Mammary epithelial cell (primary cell): ENCODE measurements at regions of chr5 and their contacts with region 1.

Region 1: DNA sequence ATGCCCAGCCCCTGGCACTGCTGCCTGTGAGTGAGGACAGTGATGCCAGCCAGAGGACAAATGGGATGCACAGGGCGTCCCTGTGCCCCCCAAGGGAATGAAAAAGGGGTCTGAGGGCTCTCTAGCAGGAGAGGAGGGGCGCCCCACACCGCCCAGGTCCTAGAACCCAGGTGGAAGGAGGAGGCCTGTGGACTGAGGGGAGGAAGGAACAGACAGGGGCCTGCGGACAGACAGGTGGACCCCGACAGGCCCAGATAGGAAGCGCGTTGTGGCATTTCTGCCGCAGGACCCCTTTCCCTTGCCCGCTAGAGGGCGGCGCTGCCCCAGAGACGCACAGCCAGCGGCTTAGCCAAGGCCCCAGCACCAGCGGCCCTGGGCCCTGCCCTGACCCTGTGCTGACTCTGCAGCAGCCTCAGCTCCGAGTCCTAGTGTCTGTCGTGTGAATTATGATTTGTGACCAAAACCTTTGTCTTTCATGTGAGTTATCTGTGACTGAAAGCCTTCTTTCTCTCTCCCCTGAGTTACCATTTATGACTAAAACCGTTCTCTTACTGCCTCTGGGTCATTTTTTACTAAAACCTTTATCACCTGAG is 30.7 kb downstream of the TRIP13 start:
- DNase-seq: peak; percentile 43
- H3K4me3 ChIP-seq: no peak overlapping the region
- H3K27ac ChIP-seq: no peak overlapping the region
- H3K4me1 ChIP-seq: no peaks in the 10 kb centered on the region
- H3K27me3 ChIP-seq: peaks cover 6% of the 10 kb centered on the region
- CTCF ChIP-seq: peak; percentile 75 to 93

Region 2: DNA sequence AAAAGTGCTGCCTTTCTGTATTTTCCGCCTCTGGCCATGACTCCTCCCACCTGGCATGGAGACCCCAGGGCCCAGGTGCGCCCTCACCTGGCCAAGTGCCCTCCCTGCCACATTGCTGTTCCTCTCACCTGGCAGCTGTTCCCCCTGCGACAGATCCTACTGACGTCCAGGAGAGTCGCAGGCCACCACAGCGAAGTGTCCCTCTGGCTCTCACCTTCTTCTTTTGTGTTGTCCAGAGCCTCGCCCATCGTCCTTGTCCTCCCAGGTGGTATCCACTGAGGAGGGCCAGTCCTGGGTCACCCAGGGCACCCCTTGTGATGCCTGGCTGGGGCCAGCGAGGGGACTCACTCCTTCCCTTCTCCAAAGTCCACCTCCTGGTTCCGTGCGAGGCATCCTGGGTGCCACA is 87.9 kb after region 1 on chr5:
- CTCF ChIA-PET with region 1: no interaction called
- dilution Hi-C with region 1: no loop called
- in situ Hi-C with region 1: no loop called
- intact Hi-C with region 1: loop called (anchors 2 kb)
- DNase-seq: no peak
- H3K4me3 ChIP-seq: no peak overlapping the region
- H3K27ac ChIP-seq: no peak overlapping the region
- H3K4me1 ChIP-seq: peaks cover 13% of the 10 kb centered on the region
- H3K27me3 ChIP-seq: peaks cover 27% of the 10 kb centered on the region
- CTCF ChIP-seq: peak; percentile 54 to 60

Region 3: DNA sequence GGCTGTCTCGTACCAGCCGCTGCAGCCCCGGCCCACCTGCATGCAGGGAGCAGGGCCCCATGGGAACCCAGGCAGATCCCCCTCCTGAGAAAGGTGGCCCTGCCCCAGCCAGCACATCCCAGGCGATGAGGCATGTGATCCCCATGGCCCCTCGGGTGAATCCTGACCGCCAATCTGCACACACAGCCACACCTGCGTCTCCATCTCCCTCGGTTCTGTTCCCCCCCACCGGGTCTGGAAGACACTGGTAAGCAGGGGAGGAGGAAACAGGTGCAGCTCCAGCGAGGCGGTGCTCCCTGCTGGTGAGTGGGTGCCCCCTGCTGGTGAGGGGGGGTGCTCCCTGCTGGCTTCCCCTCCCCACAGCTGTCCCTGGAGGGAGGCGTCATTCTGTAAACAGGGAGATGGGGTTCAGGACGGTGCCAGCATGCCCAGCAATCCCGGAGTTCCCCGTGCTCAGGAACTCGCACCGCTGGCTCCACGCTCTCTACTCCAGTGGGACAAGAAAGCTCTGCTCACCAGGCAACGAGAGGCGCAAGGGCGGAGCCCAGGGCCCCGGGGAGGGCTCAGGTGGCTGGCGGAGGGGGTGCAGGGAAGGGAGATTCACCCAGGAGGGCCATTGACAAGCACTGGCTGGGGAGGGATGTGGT is 216.9 kb after region 1 on chr5:
- CTCF ChIA-PET with region 1: interaction called, 3 read pairs
- dilution Hi-C with region 1: loop called (anchors 5 kb)
- in situ Hi-C with region 1: loop called in 1 of 2 experiments (anchors 25 kb)
- intact Hi-C with region 1: loop called (anchors 1 kb)
- DNase-seq: peak; percentile 56
- H3K4me3 ChIP-seq: no peak overlapping the region
- H3K27ac ChIP-seq: no peak overlapping the region
- H3K4me1 ChIP-seq: peaks cover 16% of the 10 kb centered on the region
- H3K27me3 ChIP-seq: peaks cover 2% of the 10 kb centered on the region
- CTCF ChIP-seq: peak; percentile 29 to 74

Region 4: DNA sequence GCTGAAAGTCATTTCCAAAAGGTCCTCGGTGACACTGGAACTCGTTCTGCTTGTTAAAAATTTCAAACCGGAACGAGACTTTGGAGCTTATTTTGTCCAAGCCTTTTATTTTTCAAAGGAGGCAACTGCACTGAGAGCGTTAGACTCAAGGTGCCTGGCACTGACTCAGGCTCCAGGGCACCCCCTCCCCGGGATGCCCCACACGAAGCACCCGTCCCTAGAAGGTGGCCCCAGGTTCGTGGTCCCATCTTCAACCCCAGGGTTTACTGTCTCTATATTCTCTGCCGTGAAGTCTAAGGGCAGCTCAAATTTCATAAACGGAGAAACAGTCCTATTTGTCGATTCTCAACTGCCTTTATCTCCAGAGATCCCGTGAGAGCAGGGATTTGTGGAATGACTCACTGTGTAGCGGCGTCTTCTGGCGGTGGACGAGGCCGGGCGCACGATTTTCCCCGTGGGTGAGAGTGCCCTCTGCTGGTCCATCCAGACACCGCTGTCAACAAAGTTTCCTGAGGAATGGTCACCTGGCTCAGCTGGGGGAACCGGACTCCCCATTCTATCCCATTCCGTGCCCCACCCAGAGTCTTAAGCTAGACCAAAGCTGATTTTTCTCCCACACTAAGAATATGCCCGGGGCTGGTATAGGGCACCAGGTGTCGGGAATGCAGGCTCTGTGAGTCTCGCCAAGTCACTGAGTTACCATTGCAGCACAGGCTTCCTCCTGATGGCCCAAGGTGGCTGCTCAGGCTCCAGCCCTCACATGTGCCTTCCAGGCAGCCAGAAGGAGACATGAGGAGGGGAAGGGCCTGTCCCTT is 251.0 kb after region 1 on chr5:
- CTCF ChIA-PET with region 1: no interaction called
- dilution Hi-C with region 1: no loop called
- in situ Hi-C with region 1: loop called in 1 of 2 experiments (anchors 10 kb)
- intact Hi-C with region 1: loop called (anchors 1 kb)
- DNase-seq: peak; percentile 57
- H3K4me3 ChIP-seq: no peak overlapping the region
- H3K27ac ChIP-seq: no peak overlapping the region
- H3K4me1 ChIP-seq: no peaks in the 10 kb centered on the region
- H3K27me3 ChIP-seq: no peaks in the 10 kb centered on the region
- CTCF ChIP-seq: peak; percentile 79 to 88